ENCODE measurements at regions of chr4 and their contacts with region 1.

Region 1: DNA sequence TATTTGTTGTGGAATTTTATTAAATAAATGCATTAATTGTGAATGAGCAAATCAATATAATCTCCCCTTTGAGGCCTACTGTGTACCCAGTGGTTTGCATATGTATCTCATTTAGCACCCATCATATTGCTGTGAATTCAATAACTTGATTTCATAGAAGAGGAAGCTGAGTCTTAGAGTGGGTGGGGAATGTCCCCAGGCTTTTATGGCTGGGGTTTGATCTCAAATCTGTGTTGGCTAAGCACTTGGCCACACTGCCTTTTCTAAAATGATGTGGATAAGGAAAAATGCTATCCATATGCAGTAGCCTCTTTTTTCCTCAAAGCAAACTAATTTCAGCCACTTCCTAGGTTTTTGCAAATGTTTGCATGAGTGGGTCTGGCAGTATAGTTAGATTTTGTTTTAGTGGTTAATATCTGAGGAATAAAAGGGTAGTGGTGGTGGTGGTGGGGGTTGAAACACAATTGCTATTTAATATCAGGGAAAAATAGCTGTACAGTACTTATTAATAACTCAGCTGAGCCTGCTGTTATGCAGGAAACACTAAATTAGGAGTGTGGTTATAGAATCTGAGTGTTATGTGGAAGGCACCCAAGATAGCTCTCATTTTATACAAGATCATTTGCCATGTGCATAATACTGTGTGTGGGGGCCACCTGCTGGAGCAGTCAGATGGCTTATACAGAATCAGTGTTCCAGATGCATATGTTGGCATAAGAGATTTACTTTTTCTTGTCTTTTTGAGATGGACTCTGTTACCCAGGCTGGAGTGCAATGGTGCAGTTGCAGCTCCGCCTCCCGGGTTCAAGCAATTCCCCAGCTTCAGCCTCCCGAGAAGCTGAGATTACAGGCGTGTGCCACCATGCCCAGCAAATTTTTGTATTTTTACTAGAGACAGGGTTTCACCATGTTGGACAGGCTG is 108.0 kb downstream of the TMEM131L start:
- DNase-seq: peak; percentile 67 to 93
- H3K4me3 ChIP-seq: no peak overlapping the region
- H3K27ac ChIP-seq: peak overlapping the region in 1 of 5 donors; percentile 39
- H3K4me1 ChIP-seq: peaks cover 0 to 45% (median 17%) of the 10 kb centered on the region in 4 donors
- H3K27me3 ChIP-seq: no peaks in the 10 kb centered on the region
- CTCF ChIP-seq: peak in 5 of 7 experiments; percentile 41 to 75 (median 60)
- EP300 ChIP-seq: no peak
- POLR2A ChIP-seq: no peak

Region 2: DNA sequence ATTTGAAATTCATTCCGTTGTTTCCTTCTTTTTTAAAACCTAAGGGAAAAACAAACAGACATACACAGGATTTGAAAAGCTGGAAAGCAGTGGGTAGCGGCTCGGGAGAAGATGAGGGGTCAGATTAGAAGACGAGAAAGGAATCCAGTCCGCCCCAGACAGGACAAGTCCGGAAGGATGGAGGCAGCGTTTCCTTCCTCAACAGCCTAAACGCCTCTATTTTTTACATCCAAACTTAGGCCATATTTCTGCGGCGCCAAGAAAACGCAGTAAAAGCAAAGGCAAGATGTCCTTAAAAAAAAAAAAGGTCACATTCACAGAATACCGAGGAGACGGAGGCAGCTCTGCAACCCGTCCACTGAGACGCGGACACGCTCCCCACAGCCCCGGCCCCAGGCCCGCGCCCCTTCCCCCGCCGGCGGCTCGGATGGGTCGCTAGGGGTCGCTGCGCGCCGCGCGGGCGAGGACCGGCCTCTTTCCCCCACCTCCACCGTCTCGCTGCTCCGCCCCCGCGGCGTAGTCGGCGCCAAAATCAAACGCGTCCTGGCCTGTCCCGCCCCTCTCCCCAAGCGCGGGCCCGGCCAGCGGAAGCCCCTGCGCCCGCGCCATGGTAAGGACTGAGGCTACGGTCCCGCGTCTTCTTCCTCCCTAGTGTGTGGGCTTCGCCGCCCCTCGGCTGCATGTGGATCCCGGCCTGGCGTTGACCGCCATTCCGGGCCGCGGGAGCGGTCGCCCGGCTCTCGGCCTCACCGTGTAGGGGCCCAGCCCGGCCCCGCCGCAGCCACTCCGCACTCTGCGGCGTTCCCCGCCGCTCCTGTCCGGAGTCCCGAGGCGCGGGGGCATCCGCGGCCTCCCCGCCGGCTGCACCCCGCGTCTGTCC is 229.8 kb before region 1 on chr4 and contains the start of gene MND1:
- intact Hi-C with region 1: loop called (anchors 5 kb)
- DNase-seq: peak; percentile 79 to 96
- H3K4me3 ChIP-seq: peak within 1 kb of the TSS; percentile 68 to 95 (median 86)
- H3K27ac ChIP-seq: peak within 1 kb of the TSS in 3 of 5 donors; percentile 52 to 69 (median 64)
- H3K4me1 ChIP-seq: peaks cover 0 to 29% (median 20%) of the 10 kb centered on the region in 4 donors
- H3K27me3 ChIP-seq: no peaks in the 10 kb centered on the region
- CTCF ChIP-seq: peak in 5 of 7 experiments; percentile 63 to 99 (median 88)
- EP300 ChIP-seq: no peak
- POLR2A ChIP-seq: no peak
- total RNA-seq, gene MND1: 4.4 to 4.5 TPM in 2 of 5 donors, not detected in the others

Region 3: GRCh38 chr4:153432968-153433753 is 141.0 kb before region 1 on chr4:
- intact Hi-C with region 1: loop called (anchors 10 kb)
- DNase-seq: peak; percentile 83
- H3K4me3 ChIP-seq: peak overlapping the region in 3 of 4 donors; percentile 10 to 23 (median 17)
- H3K27ac ChIP-seq: peak overlapping the region; percentile 48 to 84 (median 70)
- H3K4me1 ChIP-seq: peaks cover 6 to 21% (median 11%) of the 10 kb centered on the region in 4 donors
- H3K27me3 ChIP-seq: no peaks in the 10 kb centered on the region
- CTCF ChIP-seq: peak in 5 of 7 experiments; percentile 50 to 93 (median 78)
- EP300 ChIP-seq: no peak
- POLR2A ChIP-seq: no peak

Region 4: GRCh38 chr4:153466081-153466948 is 107.8 kb before region 1 on chr4 and contains the start of gene TMEM131L:
- intact Hi-C with region 1: loop called (anchors 10 kb)
- DNase-seq: peak; percentile 72 to 91
- H3K4me3 ChIP-seq: peak within 1 kb of the TSS; percentile 69 to 98 (median 82)
- H3K27ac ChIP-seq: peak within 1 kb of the TSS; percentile 81 to 89 (median 88)
- H3K4me1 ChIP-seq: peaks cover 15 to 63% (median 54%) of the 10 kb centered on the region in 4 donors
- H3K27me3 ChIP-seq: no peaks in the 10 kb centered on the region
- CTCF ChIP-seq: peak in 1 of 7 experiments; percentile 14
- EP300 ChIP-seq: no peak
- POLR2A ChIP-seq: peak in 1 of 4 donors; percentile 13
- total RNA-seq, gene TMEM131L: 12.9 to 40.0 (median 19.1) TPM

Measured in stomach (tissue), 19 donors.